ENCODE measurements at regions of chr2 and their contacts with region 1.

Region 1: DNA sequence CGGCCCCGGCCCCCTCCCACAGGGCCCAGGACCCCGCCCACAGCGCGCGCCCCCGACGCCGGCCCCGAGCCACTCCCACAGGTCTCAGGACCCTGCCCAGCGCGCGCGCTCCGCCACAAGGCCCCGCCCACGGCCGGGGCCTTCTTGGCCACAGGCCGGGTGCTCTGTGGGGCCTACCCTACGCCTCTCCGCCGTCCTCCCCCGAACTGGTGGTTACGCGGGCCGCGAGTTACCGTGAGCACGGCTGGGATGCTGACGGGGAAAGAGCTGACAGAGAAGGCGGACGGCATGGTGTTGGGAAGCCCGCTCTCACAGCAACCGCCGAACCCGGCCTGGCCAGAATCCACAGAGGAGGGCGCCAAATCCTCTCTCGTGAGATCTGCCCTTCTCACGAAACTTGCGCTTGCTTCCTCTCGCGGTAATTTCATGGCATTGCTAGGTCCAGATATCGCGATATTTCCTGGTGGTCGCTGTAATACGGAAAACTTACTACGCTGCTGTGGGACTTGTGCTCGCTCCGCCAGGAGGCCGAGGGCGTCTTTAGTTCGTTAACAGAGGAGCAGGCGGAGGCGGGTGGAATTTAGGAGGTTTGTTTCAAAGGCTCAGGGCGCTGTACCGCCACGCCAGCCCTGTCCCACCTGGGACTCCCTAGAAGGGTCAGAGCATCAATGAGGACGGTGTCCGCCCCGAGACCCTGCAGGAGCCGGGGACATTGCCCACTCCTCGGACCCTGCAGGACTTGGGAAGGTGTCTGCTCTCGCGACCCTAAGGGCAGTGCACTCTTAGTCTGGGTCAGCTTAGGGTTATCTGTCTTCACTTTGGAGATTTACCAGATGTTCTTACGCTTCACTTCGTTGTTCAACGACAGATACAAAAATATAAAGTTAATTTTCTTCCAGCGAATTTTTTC is at the start of gene TMEM18:
- DNase-seq: peak; percentile 97 to 100 (median 99)
- H3K4me3 ChIP-seq: peak within 1 kb of the TSS; percentile 100
- H3K4me3 Mint-ChIP-seq: peak within 1 kb of the TSS; percentile 93 to 98 (median 97)
- H3K27ac ChIP-seq: peak within 1 kb of the TSS; percentile 97
- H3K27ac Mint-ChIP-seq: peak within 1 kb of the TSS; percentile 97 to 99 (median 99)
- H3K4me1 ChIP-seq: peaks cover 25% of the 10 kb centered on the region
- H3K4me1 Mint-ChIP-seq: peaks cover 29 to 45% (median 35%) of the 10 kb centered on the region in 4 donors
- H3K27me3 ChIP-seq: no peaks in the 10 kb centered on the region
- H3K27me3 Mint-ChIP-seq: no peaks in the 10 kb centered on the region
- total RNA-seq, gene TMEM18: 26.2 to 28.1 TPM

Region 2: DNA sequence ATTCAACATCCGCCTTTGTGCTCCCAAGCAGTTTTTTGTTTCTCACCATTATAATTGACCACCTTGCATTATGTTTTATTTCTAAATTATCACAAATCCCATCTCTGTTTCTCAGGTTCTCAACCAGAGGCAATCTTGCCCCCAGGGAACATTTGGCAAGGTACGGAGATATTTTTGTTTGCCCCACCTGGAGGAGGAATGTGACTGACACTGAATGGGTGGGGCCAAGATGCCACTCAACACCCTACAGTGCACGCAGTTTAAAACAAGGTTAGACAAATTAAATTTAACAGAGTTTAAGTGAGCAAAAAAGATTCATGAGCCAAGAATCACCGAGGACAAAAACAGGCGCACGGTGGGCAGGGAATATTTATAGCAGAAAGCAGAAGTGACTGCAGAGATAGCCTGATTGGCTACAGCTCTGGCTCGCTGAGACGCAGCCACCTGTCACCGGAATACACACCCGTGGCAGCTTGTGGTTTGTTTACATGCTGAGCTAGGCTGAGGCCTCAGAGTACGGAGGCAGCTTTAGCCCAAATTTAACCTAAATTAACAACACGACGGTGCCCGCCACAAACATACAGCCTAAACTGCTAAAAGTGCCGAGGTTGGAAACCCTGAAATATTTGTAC is 239.4 kb before region 1 on chr2:
- CTCF ChIA-PET with region 1: no interaction called
- POLR2A ChIA-PET with region 1: interaction called, 6 read pairs
- intact Hi-C with region 1: loop called (anchors 2 kb)
- DNase-seq: peak; percentile 83 to 87 (median 86)
- H3K4me3 ChIP-seq: peak overlapping the region; percentile 30 to 33
- H3K4me3 Mint-ChIP-seq: peak overlapping the region; percentile 81 to 94 (median 86)
- H3K27ac ChIP-seq: peak overlapping the region; percentile 62
- H3K27ac Mint-ChIP-seq: peak overlapping the region; percentile 88 to 100 (median 98)
- H3K4me1 ChIP-seq: peaks cover 24% of the 10 kb centered on the region
- H3K4me1 Mint-ChIP-seq: peaks cover 15 to 32% (median 25%) of the 10 kb centered on the region in 4 donors
- H3K27me3 ChIP-seq: no peaks in the 10 kb centered on the region
- H3K27me3 Mint-ChIP-seq: no peaks in the 10 kb centered on the region

Measured in CD4-positive, alpha-beta memory T cell (primary cell).